ENCODE measurements at regions of chr4 and their contacts with region 1.

Region 1: GRCh38 chr4:18593445-18594002 is 572.0 kb upstream of the LCORL start:
- DNase-seq: no peak
- ATAC-seq: peak in 3 of 4 donors; percentile 22 to 69 (median 40)
- H3K4me3 ChIP-seq: no peak overlapping the region
- H3K27ac ChIP-seq: no peak overlapping the region
- H3K4me1 ChIP-seq: no peaks in the 10 kb centered on the region
- H3K27me3 ChIP-seq: no peaks in the 10 kb centered on the region
- CTCF ChIP-seq: peak; percentile 74

Region 2: DNA sequence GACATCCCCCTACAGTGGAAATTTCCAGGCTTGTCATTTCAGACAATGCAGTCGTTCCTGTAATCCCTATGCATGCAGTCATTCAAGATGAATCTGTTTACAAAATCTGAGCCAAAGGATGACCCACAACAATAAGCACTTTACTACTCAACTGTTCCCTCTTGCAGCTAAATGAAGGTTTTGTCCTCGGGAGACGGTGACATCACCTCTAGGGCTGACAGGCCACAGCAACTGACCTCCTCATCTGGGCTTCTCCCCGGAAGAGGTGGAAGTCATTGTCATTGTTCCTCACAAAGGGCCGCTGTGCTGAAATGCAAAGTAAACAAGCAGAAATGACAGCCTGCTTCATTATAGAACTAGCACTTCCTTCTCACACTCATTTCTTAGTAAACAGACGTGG is 1049.3 kb before region 1 on chr4:
- intact Hi-C with region 1: loop called in 1 of 2 experiments (anchors 5 kb)
- DNase-seq: no peak
- ATAC-seq: no peak
- H3K4me3 ChIP-seq: no peak overlapping the region
- H3K27ac ChIP-seq: no peak overlapping the region
- H3K4me1 ChIP-seq: no peaks in the 10 kb centered on the region
- H3K27me3 ChIP-seq: no peaks in the 10 kb centered on the region
- CTCF ChIP-seq: no peak

Region 3: GRCh38 chr4:17817020-17817419 is 776.5 kb before region 1 on chr4:
- intact Hi-C with region 1: loop called (anchors 5 kb)
- DNase-seq: no peak
- ATAC-seq: peak in 1 of 4 donors; percentile 69
- H3K4me3 ChIP-seq: no peak overlapping the region
- H3K27ac ChIP-seq: no peak overlapping the region
- H3K4me1 ChIP-seq: no peaks in the 10 kb centered on the region
- H3K27me3 ChIP-seq: no peaks in the 10 kb centered on the region
- CTCF ChIP-seq: peak; percentile 64

Region 4: GRCh38 chr4:17823871-17824669 is 769.5 kb before region 1 on chr4:
- intact Hi-C with region 1: loop called (anchors 5 kb)
- DNase-seq: no peak
- ATAC-seq: no peak
- H3K4me3 ChIP-seq: no peak overlapping the region
- H3K27ac ChIP-seq: no peak overlapping the region
- H3K4me1 ChIP-seq: no peaks in the 10 kb centered on the region
- H3K27me3 ChIP-seq: no peaks in the 10 kb centered on the region
- CTCF ChIP-seq: no peak